PC-9 (cell line): ENCODE measurements at regions of chr10 and their contacts with region 1.

Region 1: GRCh38 chr10:26556748-26557640 is 118.9 kb downstream of the APBB1IP start:
- DNase-seq: peak in 1 of 2 experiments; percentile 4
- H3K4me3 ChIP-seq: no peak overlapping the region
- H3K27ac ChIP-seq: no peak overlapping the region
- H3K4me1 ChIP-seq: no peaks in the 10 kb centered on the region
- H3K27me3 ChIP-seq: 0 out of 2 replicates have a peak, but pooled peaks cover 1% of the 10 kb centered on the region
- CTCF ChIP-seq: peak; percentile 69

Region 2: DNA sequence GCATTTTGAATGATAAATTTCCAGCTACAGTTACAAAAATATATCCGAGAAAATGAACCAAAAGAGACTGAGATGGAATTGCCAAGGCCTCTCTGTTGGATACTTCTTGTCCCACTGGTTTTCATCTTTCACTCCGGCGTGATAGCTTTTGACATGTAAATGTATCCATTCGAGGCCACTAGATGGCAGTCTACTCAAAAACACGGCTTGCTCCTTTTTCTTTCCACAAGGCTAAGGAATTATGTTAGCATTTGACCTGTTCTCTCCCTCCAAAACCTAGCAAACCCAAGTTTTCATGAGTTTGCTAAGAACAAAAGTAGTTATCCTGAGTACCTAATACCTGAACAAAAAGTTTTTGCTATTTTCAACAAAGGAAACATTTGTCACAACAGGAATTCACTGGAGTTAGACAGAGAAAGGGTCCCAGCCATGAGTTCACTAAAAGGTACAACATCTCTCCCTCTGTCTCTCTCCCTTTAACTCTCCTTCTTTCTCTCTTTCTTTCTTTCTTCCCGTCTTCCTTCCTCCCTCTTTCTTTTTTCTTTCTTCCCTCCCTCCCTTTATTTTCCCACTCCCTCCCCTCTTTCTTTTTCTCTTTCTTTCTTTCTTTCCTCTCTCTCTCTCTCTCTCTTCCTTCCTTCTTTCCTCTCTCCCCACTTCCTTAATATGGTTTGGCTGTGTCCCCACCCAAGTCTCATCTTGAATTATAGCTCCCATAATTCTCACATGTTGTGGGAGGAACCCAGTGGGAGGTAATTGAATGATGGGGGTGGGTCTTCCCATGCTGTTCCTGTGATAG is 830.9 kb before region 1 on chr10:
- CTCF ChIA-PET with region 1: no interaction called
- POLR2A ChIA-PET with region 1: no interaction called
- intact Hi-C with region 1: loop called (anchors 5 kb)
- DNase-seq: peak in 1 of 2 experiments; percentile 11
- H3K4me3 ChIP-seq: no peak overlapping the region
- H3K27ac ChIP-seq: no peak overlapping the region
- H3K4me1 ChIP-seq: no peaks in the 10 kb centered on the region
- H3K27me3 ChIP-seq: no peaks in the 10 kb centered on the region
- CTCF ChIP-seq: peak; percentile 67

Region 3: DNA sequence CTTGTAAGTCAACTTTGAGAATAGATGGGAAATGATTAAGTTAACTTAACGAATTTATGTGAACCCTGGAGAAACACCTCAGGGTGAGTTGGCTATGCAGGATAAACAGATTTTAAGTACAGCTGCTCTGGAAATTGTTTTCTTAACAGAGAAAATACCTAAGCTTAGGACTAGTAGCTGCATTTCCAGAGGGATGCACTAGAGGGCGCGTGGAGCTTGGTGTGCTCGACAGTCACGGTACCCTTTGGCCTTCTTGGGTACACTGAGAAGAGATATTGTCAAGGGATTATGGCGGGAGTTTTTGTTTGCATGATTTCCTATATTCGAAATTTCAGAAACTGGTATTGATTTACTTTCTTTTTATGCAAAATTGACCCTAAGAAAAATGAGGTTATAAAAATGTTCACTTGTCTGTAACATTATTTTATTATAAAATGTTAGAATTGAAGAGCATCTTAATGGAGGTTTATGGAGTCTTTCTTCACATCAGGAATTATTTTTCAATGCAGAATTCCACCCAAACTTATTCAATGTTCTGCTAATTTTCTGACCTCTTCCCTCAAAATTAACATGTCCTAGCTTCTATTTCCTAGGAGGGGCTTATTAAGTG is 681.3 kb before region 1 on chr10:
- CTCF ChIA-PET with region 1: interaction called, 8 read pairs
- POLR2A ChIA-PET with region 1: no interaction called
- intact Hi-C with region 1: loop called (anchors 1 kb)
- DNase-seq: peak in 1 of 2 experiments; percentile 37
- H3K4me3 ChIP-seq: no peak overlapping the region
- H3K27ac ChIP-seq: no peak overlapping the region
- H3K4me1 ChIP-seq: no peaks in the 10 kb centered on the region
- H3K27me3 ChIP-seq: no peaks in the 10 kb centered on the region
- CTCF ChIP-seq: peak; percentile 84

Region 4: GRCh38 chr10:26334932-26335573 is 221.9 kb before region 1 on chr10:
- CTCF ChIA-PET with region 1: no interaction called
- POLR2A ChIA-PET with region 1: no interaction called
- intact Hi-C with region 1: loop called (anchors 1 kb)
- DNase-seq: peak in 1 of 2 experiments; percentile 28
- H3K4me3 ChIP-seq: no peak overlapping the region
- H3K27ac ChIP-seq: no peak overlapping the region
- H3K4me1 ChIP-seq: no peaks in the 10 kb centered on the region
- H3K27me3 ChIP-seq: 0 out of 2 replicates have a peak, but pooled peaks cover 2% of the 10 kb centered on the region
- CTCF ChIP-seq: peak; percentile 70

Region 5: GRCh38 chr10:26621889-26622711 is 65.1 kb after region 1 on chr10:
- CTCF ChIA-PET with region 1: no interaction called
- POLR2A ChIA-PET with region 1: no interaction called
- intact Hi-C with region 1: no loop called
- DNase-seq: no peak
- H3K4me3 ChIP-seq: no peak overlapping the region
- H3K27ac ChIP-seq: no peak overlapping the region
- H3K4me1 ChIP-seq: no peaks in the 10 kb centered on the region
- H3K27me3 ChIP-seq: peaks cover 24% of the 10 kb centered on the region
- CTCF ChIP-seq: no peak